GM10248 (cell line): ENCODE measurements at regions of chr19 and their contacts with region 1.

Region 1: GRCh38 chr19:8697671-8698432 is 743 bp downstream of the ACTL9 start:
- DNase-seq: no peak
- CTCF ChIP-seq: no peak

Region 2: DNA sequence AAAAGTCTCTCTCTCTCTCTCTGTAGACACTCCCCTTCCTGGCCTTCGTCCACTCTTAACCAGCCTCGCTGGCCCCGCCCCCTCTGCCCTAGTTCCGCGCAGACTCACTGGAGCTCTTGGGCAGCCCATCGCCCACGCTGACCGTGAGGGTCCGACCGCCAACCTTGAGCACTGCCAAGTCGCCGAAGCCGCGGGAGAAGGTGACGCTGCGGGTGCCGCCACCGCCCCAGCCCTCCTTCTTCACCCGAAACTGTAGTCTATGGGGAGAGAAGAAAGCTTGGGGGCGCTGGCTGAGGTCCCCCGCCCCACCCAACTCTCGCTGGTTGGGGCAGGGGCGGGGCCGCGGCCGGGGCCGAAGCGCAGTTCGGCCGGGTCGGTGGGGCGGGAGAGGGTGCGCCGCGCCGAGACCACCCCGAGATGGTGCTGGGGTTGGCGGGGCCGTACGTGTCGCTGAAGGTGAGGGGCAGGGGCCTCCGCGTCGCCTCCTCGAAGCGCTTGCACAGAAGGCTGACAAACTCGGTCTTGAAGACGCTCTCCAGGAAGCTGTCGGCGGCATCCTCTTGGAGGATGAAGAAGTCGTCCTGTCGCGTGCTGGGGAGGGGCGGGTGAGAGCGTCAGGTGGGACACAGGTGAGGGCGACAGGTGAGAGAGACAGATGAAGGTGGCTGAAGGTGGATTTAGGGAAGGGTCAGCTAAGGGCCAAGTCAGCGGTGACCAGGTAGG is 171.3 kb before region 1 on chr19:
- CTCF ChIA-PET with region 1: no interaction called
- POLR2A ChIA-PET with region 1: no interaction called
- DNase-seq: peak; percentile 67
- CTCF ChIP-seq: no peak

Region 3: GRCh38 chr19:8654591-8655339 is 43.1 kb before region 1 on chr19:
- CTCF ChIA-PET with region 1: interaction called, 73 read pairs
- POLR2A ChIA-PET with region 1: no interaction called
- DNase-seq: peak; percentile 79
- CTCF ChIP-seq: peak; percentile 94

Region 4: GRCh38 chr19:8663920-8664670 is 33.8 kb before region 1 on chr19:
- CTCF ChIA-PET with region 1: interaction called, 10 read pairs
- POLR2A ChIA-PET with region 1: no interaction called
- DNase-seq: no peak
- CTCF ChIP-seq: no peak

Region 5: DNA sequence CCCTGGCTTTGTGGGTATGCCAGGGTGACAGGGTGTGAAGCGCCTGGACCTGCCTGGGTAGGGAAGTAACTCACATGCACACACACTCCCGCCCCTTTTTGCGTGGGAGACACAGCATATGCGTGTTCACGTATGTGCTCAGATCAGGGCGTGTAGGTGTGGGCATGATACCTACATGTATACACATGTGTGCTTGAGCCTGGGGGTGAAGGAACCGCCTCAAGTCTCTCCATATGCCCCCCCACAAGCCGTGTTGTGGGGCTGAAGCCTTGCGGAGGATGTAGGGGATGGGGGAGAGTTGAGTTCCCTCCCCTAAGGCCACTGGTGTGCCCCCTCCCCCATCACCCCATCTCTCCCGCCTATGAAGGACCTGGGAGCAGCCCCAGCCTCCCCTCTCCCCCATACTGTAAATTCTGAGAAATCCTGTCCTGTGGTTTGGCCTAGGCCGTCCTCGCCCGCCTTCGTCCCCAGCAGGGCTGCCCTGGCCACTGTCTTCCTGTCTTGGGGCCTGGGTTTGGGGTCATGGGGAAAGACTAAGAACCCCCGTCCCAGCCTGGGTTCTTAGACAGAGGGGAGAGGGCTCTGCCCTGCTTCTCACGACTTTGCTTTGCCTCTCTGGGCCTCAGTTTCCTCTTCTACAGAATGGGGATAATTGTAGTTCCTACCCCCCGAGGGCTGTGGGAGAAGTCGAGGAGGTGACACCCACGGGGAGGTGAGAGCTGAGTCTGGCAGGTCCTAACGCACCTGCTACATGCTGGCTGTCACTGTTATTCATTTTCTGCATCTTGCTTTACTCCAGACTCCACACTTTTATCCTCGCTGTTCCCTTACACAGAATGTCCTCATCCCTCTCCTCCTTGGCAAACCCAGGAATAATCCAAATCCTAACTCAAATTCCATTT is 13.6 kb before region 1 on chr19:
- CTCF ChIA-PET with region 1: interaction called, 12 read pairs
- POLR2A ChIA-PET with region 1: no interaction called
- DNase-seq: no peak
- CTCF ChIP-seq: no peak